Ovary (tissue), 10 donors: ENCODE measurements at regions of chr1 and their contacts with region 1.

Region 1: DNA sequence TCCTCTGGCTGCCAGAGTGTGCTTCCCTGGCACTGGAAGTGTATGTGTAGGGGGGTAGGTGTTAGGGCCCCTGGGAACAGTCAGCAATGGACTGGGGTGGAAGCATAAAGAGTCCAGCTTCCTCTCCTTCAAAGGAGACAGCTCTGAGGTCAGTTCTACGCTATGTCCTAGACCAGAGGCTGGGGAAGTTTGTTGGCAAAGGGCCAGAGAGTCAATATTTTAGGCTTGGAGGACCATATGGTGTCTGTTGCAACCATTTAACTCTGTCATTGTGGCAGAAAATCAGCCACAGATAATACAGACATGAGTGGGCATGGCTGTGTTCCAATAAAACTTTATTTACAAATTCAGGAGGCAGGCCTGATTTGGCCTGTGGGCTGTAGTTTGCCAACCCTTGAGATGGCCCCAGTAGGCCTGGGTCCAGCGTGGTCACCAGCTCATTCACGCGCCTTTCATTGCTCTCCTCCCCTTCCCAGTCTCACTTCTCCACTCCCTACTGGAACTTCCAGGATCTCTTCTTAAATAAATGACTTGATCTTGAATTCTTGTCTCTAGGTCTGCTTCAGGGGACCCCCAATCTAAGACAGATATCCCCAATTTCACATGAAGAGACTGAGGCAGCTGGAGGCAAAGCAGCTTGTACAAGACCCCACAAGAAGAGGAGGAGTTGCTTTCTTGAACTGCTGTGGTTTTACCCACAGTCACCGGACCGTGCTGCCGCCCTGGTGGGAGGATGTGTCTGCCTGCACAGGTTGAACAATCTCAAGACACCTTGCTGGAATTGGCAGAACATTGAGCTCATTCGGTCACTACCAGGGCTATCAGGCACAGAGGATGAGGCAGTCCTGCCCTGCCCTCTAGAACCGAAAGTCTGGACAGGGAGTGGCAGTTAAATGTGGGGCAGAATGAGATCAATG is 162.4 kb upstream of the POU3F1 start:
- DNase-seq: no peak
- H3K4me3 ChIP-seq: no peak overlapping the region
- H3K27ac ChIP-seq: no peak overlapping the region
- H3K4me1 ChIP-seq: no peaks in the 10 kb centered on the region
- H3K27me3 ChIP-seq: no peaks in the 10 kb centered on the region
- CTCF ChIP-seq: no peak
- EP300 ChIP-seq: no peak
- POLR2A ChIP-seq: no peak

Region 2: DNA sequence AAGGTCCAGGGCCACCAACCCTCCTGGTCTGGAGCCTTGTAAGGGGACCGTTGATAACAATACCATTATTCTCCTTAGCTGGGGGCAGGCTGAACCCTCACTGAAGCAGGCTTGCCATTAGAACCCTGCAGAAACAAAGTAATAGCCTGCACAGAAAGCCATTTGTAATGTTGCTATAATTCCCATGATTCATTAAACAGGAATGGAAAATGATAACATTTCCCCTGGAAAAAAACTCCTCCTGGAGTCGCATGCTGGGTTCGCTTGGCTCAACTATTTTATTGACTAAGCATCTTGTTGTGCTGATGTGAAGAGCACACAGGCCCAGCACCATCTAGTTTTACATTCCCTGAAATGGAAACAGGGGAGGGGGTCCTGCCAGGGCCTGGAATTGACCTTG is 1570.7 kb before region 1 on chr1:
- intact Hi-C with region 1: loop called in 1 of 4 experiments (anchors 10 kb)
- DNase-seq: no peak
- H3K4me3 ChIP-seq: no peak overlapping the region
- H3K27ac ChIP-seq: no peak overlapping the region
- H3K4me1 ChIP-seq: no peaks in the 10 kb centered on the region
- H3K27me3 ChIP-seq: no peaks in the 10 kb centered on the region
- CTCF ChIP-seq: no peak
- EP300 ChIP-seq: no peak
- POLR2A ChIP-seq: no peak

Region 3: GRCh38 chr1:38123391-38123992 is 85.5 kb before region 1 on chr1:
- intact Hi-C with region 1: no loop called
- DNase-seq: no peak
- H3K4me3 ChIP-seq: no peak overlapping the region
- H3K27ac ChIP-seq: no peak overlapping the region
- H3K4me1 ChIP-seq: no peaks in the 10 kb centered on the region
- H3K27me3 ChIP-seq: no peaks in the 10 kb centered on the region
- CTCF ChIP-seq: no peak
- EP300 ChIP-seq: no peak
- POLR2A ChIP-seq: no peak

Region 4: DNA sequence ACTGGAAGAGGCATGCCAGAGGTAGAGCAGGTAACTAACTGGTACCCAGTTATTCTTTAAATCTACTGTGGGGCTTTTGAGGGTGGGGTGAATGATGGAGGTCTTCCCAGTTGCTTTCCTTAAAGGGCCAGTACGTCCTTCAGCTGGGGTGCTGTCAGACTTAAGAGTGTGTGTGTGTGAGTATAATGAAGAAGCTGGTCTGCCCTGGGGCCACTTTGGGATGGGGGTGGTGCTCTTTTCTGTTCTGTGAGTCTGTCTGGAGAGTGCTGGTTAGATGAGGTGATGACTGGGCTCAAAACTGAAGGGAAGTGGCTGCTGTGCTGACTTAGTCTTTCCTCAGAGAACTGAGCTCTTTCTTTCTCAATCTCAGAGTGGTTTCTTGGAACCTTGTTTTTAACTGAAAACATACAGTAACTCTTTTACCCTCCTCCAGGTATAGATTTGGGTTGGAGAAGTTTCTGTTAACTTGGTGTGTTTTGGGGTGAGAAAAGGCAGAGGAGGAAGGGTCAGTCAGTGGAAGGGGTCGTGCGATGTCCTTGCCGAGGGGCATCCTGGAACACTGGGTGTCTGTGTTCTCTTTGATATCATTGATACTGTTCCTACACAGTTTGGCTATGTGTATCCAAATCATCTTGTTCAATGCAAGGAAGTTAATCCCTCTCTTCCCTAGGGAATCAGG is 996.3 kb after region 1 on chr1:
- intact Hi-C with region 1: no loop called
- DNase-seq: peak in 2 of 5 donors; percentile 21 to 45
- H3K4me3 ChIP-seq: peak overlapping the region; percentile 48
- H3K27ac ChIP-seq: peak overlapping the region; percentile 78 to 95
- H3K4me1 ChIP-seq: peaks cover 7% of the 10 kb centered on the region
- H3K27me3 ChIP-seq: no peaks in the 10 kb centered on the region
- CTCF ChIP-seq: no peak
- EP300 ChIP-seq: no peak
- POLR2A ChIP-seq: no peak